Activated T-helper 1 cell treated with anti-CD3 and anti-CD28 coated beads, Interleukin-12 subunit alpha, Interleukin-12 subunit beta, Interleukin-2, Interleukin-4 antibody, amounts not matched to agents 30 ng/mL and 10 ng/mL and 1 ng/mL, durations not matched to agents 14 hours and 24 hours and 36 hours (primary cell): ENCODE measurements at regions of chr4 and their contacts with region 1.

Region 1: DNA sequence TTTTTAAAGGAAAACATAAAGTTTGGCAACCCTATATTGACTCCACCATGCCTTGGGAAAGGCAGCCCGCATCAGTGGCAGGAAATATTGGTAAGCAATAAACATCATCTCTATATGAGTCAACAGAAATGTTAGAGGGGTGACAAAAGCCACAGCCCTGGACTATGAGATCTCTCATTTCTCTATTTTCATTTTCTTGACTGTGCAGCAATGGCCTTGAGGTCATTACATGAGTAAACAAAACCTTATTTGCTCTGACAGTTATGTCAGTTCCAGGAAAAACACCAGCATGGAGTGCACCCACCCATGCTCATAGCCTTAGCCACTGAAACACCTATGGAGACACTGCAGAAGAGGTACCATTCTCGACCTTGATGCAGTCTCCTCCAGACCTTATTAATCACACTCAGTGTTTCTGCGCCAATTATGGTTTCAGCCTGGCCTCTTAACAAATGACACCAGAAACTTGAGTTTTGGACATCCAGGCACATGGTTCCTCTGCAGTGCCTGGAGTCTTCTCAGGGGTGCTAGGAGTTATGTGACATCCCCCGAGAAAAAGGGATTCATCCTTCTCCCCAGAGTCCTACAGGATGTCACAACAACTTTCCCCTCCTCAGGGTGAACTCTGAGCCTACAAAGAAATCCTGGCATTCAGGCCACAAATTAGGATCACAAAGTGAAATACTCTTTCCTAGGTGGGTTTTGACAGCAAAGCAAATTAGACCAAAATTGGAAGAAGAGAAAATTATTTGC is 16.0 kb upstream of the HPGD start:
- DNase-seq: peak; percentile 12
- H3K4me3 Mint-ChIP-seq: no peak overlapping the region
- H3K27ac Mint-ChIP-seq: peak overlapping the region; percentile 75
- H3K4me1 Mint-ChIP-seq: peaks cover 31% of the 10 kb centered on the region
- H3K27me3 Mint-ChIP-seq: peaks cover 5% of the 10 kb centered on the region

Region 2: GRCh38 chr4:174358829-174359228 is 179.5 kb before region 1 on chr4:
- intact Hi-C with region 1: loop called (anchors 5 kb)
- DNase-seq: peak; percentile 22
- H3K4me3 Mint-ChIP-seq: no peak overlapping the region
- H3K27ac Mint-ChIP-seq: peak overlapping the region; percentile 84
- H3K4me1 Mint-ChIP-seq: peaks cover 26% of the 10 kb centered on the region
- H3K27me3 Mint-ChIP-seq: peaks cover 13% of the 10 kb centered on the region

Region 3: GRCh38 chr4:174490451-174490870 is 47.8 kb before region 1 on chr4:
- intact Hi-C with region 1: loop called (anchors 1 kb)
- DNase-seq: no peak
- H3K4me3 Mint-ChIP-seq: no peak overlapping the region
- H3K27ac Mint-ChIP-seq: no peak overlapping the region
- H3K4me1 Mint-ChIP-seq: no peaks in the 10 kb centered on the region
- H3K27me3 Mint-ChIP-seq: peaks cover 2% of the 10 kb centered on the region

Region 4: DNA sequence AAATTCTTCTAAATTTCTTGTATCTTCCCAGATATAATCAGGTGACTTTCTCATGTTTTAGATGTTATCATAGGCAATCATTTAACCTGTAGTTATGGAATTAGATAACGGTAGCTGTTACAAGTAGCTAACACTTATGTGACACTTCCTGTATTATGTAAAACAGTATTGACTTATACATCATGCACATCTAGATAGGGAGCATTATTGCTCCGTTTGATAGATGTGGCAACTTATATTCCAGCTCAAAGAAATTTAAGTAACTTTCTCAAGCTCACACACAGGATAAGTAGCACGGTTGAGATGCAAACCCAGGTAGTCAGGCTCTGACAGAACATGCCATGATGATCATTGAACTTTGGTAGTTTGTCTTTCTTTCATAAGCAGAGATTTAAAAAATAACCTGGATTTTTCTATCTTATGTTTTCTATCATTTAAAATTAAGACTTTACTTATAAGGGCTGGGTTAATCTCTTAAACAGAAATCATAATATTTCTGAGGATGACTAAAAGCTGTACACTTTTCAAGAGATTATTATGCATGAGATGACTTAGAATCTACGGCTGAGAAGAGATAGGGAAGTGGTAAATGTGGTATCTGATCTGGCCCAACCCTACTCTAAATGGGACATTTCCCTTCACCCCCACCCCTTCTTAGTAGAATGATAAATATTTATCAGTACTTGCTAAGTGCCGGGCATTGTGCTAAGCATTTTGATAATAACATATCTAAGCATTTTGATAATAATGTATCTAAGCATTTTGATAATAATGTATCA is 53.1 kb after region 1 on chr4:
- intact Hi-C with region 1: loop called (anchors 2 kb)
- DNase-seq: no peak
- H3K4me3 Mint-ChIP-seq: no peak overlapping the region
- H3K27ac Mint-ChIP-seq: no peak overlapping the region
- H3K4me1 Mint-ChIP-seq: peaks cover 16% of the 10 kb centered on the region
- H3K27me3 Mint-ChIP-seq: no peaks in the 10 kb centered on the region